ENCODE measurements at regions of chr11 and their contacts with region 1.

Region 1: DNA sequence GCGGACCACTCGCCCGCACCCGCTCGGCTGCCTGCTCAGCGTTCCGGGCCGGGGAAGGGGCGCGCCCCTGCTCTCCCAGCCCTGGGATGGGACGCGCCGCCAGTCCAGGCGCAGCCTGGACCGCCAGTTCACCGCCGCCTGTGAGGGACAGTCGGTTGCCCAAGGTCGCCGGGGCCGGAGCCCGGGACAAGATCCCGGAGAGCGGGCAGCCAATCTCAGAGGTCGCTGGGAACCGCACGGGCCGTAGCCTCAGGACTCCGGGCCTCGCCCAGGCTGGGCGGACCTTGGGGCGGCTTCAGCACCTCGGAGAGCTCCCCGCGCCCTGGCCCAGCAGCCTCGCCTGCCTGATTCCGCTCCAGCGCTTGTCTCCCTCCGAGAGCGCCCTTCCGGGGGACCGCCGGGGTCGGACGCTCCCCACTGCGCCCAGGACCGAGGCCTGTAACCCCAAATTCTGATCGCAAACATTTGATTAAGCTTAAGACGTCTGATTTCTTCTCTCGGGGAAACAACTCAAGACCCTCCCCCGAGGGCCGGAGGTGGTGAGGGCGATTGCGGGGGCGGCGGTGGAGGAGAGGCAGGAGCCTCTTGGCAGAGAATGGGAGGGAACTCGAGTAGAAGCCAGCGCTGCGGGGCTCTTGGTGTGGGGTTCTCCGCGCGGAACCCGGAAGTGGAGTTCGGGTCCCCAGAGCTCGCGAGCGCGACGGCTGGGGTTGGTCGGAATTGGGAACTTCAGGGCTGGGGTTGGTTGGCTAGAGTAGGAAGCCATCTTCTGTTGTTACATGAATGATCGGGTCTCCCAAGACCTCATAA is 1.1 kb upstream of the CHRM4 start:
- DNase-seq: peak; percentile 88
- H3K4me3 ChIP-seq: peak overlapping the region; percentile 29 to 36
- H3K27ac ChIP-seq: no peak overlapping the region
- H3K4me1 ChIP-seq: peaks cover 27% of the 10 kb centered on the region
- H3K27me3 ChIP-seq: no peaks in the 10 kb centered on the region
- CTCF ChIP-seq: no peak
- POLR2A ChIP-seq: no peak

Region 2: GRCh38 chr11:46529095-46529905 is 136.7 kb after region 1 on chr11:
- intact Hi-C with region 1: loop called (anchors 10 kb)
- DNase-seq: peak; percentile 82
- H3K4me3 ChIP-seq: no peak overlapping the region
- H3K27ac ChIP-seq: no peak overlapping the region
- H3K4me1 ChIP-seq: peaks cover 13% of the 10 kb centered on the region
- H3K27me3 ChIP-seq: no peaks in the 10 kb centered on the region
- CTCF ChIP-seq: peak; percentile 84 to 96 (median 86)
- POLR2A ChIP-seq: no peak

Measured in testis (tissue), 5 donors.